ENCODE measurements at regions of chr14 and their contacts with region 1.

Region 1: GRCh38 chr14:105999361-106000028 is 473.1 kb downstream of the TMEM121 start:
- DNase-seq: peak; percentile 25
- ATAC-seq: peak; percentile 82
- H3K4me3 Mint-ChIP-seq: no peak overlapping the region
- H3K27ac Mint-ChIP-seq: no peak overlapping the region
- H3K4me1 Mint-ChIP-seq: peaks cover 11% of the 10 kb centered on the region
- H3K27me3 Mint-ChIP-seq: no peaks in the 10 kb centered on the region
- CTCF ChIP-seq: no peak

Region 2: GRCh38 chr14:105944632-105945610 is 54.6 kb before region 1 on chr14:
- CTCF ChIA-PET with region 1: no interaction called
- POLR2A ChIA-PET with region 1: no interaction called
- intact Hi-C with region 1: loop called (anchors 5 kb)
- DNase-seq: peak; percentile 53
- ATAC-seq: peak; percentile 70
- H3K4me3 Mint-ChIP-seq: peak overlapping the region; percentile 24
- H3K27ac Mint-ChIP-seq: peak overlapping the region; percentile 46
- H3K4me1 Mint-ChIP-seq: peaks cover 42% of the 10 kb centered on the region
- H3K27me3 Mint-ChIP-seq: no peaks in the 10 kb centered on the region
- CTCF ChIP-seq: no peak

Region 3: DNA sequence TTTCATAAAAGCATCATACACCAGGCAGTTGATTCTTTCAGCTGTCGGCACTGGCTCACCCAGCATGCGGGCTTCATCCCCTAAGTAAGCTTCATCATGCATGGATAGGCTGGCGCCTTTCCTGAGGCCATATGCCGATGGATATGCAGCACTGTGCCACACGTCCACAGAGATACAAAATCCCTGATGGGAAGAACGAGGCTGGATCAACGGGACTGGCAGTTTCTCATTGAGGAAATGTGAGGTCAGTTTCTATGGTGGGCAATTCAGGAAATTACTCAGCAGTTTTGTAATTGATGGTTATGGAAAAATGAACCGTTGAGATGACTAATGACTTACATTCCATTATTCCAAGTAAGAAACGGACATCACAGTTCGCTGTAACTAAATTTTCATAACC is 19.3 kb before region 1 on chr14:
- CTCF ChIA-PET with region 1: no interaction called
- POLR2A ChIA-PET with region 1: no interaction called
- intact Hi-C with region 1: loop called (anchors 2 kb)
- DNase-seq: no peak
- ATAC-seq: no peak
- H3K4me3 Mint-ChIP-seq: no peak overlapping the region
- H3K27ac Mint-ChIP-seq: no peak overlapping the region
- H3K4me1 Mint-ChIP-seq: peaks cover 19% of the 10 kb centered on the region
- H3K27me3 Mint-ChIP-seq: no peaks in the 10 kb centered on the region
- CTCF ChIP-seq: no peak

Measured in activated B cell treated with CpG ODN at 0.5 μM for 24 hours (primary cell).